ENCODE measurements at regions of chr2 and their contacts with region 1.

Region 1: DNA sequence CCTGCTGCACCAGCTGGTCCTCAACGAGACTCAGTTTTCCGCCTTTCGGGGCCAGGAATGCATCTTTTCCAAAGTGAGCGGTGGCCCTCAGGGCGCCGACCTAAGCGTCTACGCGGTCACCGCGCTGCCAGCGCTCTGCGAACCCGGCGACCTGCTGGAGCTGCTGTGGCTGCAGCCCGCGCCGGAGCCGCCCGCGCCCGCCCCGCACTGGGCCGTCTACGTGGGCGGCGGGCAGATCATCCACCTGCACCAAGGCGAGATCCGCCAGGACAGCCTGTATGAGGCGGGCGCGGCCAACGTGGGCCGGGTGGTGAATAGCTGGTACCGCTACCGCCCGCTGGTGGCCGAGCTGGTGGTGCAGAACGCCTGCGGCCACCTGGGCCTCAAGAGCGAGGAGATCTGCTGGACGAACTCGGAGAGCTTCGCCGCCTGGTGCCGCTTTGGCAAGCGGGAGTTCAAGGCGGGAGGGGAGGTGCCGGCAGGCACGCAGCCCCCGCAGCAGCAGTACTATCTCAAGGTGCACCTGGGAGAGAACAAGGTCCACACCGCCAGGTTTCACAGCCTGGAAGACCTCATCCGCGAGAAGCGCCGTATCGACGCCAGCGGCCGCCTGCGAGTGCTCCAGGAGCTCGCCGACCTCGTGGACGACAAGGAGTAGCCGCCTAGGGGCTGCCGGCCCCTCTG is 1.8 kb downstream of the LRATD1 start:
- DNase-seq: peak; percentile 89
- H3K4me3 ChIP-seq: peak overlapping the region; percentile 43 to 64 (median 56)
- H3K27ac ChIP-seq: peak overlapping the region; percentile 79 to 91 (median 90)
- H3K4me1 ChIP-seq: peaks cover 0 to 36% (median 33%) of the 10 kb centered on the region in 4 donors
- H3K27me3 ChIP-seq: peaks cover 0 to 11% (median 0%) of the 10 kb centered on the region in 3 donors
- CTCF ChIP-seq: peak; percentile 23 to 73 (median 65)
- EP300 ChIP-seq: no peak
- POLR2A ChIP-seq: no peak

Region 2: GRCh38 chr2:14577843-14578242 is 56.5 kb before region 1 on chr2:
- intact Hi-C with region 1: no loop called
- DNase-seq: no peak
- H3K4me3 ChIP-seq: no peak overlapping the region
- H3K27ac ChIP-seq: no peak overlapping the region
- H3K4me1 ChIP-seq: no peaks in the 10 kb centered on the region
- H3K27me3 ChIP-seq: no peaks in the 10 kb centered on the region
- CTCF ChIP-seq: no peak
- EP300 ChIP-seq: no peak
- POLR2A ChIP-seq: no peak

Region 3: GRCh38 chr2:14647714-14648113 is 13.4 kb after region 1 on chr2:
- intact Hi-C with region 1: no loop called
- DNase-seq: no peak
- H3K4me3 ChIP-seq: no peak overlapping the region
- H3K27ac ChIP-seq: no peak overlapping the region
- H3K4me1 ChIP-seq: peaks cover 0 to 8% (median 0%) of the 10 kb centered on the region in 4 donors
- H3K27me3 ChIP-seq: no peaks in the 10 kb centered on the region
- CTCF ChIP-seq: no peak
- EP300 ChIP-seq: no peak
- POLR2A ChIP-seq: no peak

Region 4: DNA sequence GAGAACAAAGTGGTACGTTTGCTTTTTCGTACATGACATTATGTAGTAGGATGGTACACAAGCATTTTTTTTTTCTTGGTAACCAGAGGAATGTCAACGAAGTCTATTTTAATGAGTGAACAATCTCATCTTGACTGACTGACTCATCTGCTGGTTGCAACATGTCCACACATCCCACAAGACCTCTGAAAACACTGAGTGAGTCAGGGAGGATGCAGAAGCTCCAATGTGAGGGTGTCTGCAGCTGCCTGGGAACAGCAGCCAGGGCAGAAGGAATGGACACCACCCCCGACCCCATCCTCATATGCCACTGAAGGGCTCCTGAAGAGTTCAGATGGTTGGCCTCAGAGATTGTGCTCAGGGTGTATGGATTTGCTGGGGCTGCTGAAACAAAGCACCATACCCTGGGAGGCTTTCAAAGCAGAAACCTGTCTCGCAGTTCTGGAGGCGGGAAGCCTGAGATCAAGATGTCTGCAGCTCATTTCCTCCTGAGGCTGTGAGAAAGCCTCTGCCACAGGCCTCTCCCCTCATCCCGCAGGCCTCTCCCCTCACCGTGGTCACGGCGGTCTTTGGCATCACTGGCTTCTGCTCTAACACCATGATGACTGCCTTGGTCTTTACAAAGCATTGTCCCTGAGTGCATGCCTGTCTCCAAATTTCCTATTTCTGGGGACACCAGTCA is 122.8 kb after region 1 on chr2:
- intact Hi-C with region 1: no loop called
- DNase-seq: no peak
- H3K4me3 ChIP-seq: no peak overlapping the region
- H3K27ac ChIP-seq: no peak overlapping the region
- H3K4me1 ChIP-seq: no peaks in the 10 kb centered on the region
- H3K27me3 ChIP-seq: no peaks in the 10 kb centered on the region
- CTCF ChIP-seq: no peak
- EP300 ChIP-seq: no peak
- POLR2A ChIP-seq: no peak

Region 5: DNA sequence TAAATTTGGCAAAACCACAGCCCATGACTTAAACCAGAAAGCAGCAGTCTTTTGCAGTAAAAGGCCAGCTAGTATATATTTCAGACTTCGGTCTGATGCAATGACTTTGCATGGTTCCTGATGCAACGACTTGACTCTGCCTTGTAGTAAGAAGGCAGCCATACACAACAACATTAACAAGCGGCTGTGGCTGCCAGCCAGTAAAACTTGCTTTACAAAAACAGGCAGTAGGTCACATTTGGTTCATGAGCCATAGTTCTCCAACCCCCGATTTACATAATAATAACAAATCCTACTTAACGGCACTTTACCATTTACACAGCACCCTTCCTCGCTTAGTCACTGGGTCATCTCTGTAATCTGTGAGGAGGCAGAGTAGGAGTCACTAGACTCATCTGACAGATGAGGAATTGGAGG is 408.5 kb after region 1 on chr2:
- intact Hi-C with region 1: loop called (anchors 2 kb)
- DNase-seq: peak; percentile 93
- H3K4me3 ChIP-seq: no peak overlapping the region
- H3K27ac ChIP-seq: peak overlapping the region; percentile 56 to 82 (median 70)
- H3K4me1 ChIP-seq: peaks cover 0 to 31% (median 21%) of the 10 kb centered on the region in 4 donors
- H3K27me3 ChIP-seq: no peaks in the 10 kb centered on the region
- CTCF ChIP-seq: no peak
- EP300 ChIP-seq: peak in 3 of 4 donors; percentile 34 to 66 (median 38)
- POLR2A ChIP-seq: no peak

Region 6: GRCh38 chr2:15159751-15160177 is 525.4 kb after region 1 on chr2:
- intact Hi-C with region 1: loop called (anchors 5 kb)
- DNase-seq: no peak
- H3K4me3 ChIP-seq: no peak overlapping the region
- H3K27ac ChIP-seq: no peak overlapping the region
- H3K4me1 ChIP-seq: no peaks in the 10 kb centered on the region
- H3K27me3 ChIP-seq: no peaks in the 10 kb centered on the region
- CTCF ChIP-seq: peak in 2 of 4 experiments; percentile 21 to 45
- EP300 ChIP-seq: no peak
- POLR2A ChIP-seq: no peak

Region 7: DNA sequence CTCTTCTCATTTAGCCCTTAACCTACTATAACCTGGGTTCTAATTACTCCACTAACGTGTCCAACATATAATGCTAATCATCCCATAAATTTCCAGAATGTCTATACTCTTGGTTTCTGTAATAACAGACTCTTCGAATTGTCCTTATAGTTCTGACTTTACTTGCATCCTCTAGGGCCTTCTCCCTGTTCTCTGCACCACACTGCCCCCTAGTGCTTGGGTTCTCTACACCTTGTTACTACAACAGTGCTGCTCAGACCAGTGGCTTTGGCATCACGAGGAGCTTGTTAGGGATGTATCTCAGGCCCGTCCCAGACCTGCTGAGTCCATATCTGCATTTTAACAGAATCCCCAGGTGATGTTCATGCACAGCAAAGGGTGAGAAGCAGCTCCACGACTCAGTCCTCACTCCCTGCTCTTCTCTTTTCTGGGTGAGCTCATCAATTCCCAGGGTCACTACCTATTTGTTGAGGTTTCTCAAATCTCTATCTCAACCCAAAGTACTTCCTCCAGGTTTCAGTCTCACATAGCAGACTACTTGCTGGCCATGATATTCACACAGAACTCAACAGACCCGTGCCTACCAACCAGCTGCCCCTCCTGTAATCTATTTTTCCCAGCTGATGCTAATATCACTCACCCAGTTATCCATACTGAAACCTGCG is 942.9 kb after region 1 on chr2:
- intact Hi-C with region 1: loop called (anchors 10 kb)
- DNase-seq: peak; percentile 87
- H3K4me3 ChIP-seq: no peak overlapping the region
- H3K27ac ChIP-seq: no peak overlapping the region
- H3K4me1 ChIP-seq: no peaks in the 10 kb centered on the region
- H3K27me3 ChIP-seq: no peaks in the 10 kb centered on the region
- CTCF ChIP-seq: peak; percentile 27 to 67 (median 49)
- EP300 ChIP-seq: no peak
- POLR2A ChIP-seq: no peak

Region 8: GRCh38 chr2:15984368-15985255 is 1350.3 kb after region 1 on chr2:
- intact Hi-C with region 1: no loop called
- DNase-seq: peak; percentile 68
- H3K4me3 ChIP-seq: no peak overlapping the region
- H3K27ac ChIP-seq: peak overlapping the region; percentile 9 to 61 (median 34)
- H3K4me1 ChIP-seq: peaks cover 0 to 10% (median 7%) of the 10 kb centered on the region in 4 donors
- H3K27me3 ChIP-seq: no peaks in the 10 kb centered on the region
- CTCF ChIP-seq: no peak
- EP300 ChIP-seq: no peak
- POLR2A ChIP-seq: no peak